ENCODE measurements at regions of chr2 and their contacts with region 1.

Region 1: DNA sequence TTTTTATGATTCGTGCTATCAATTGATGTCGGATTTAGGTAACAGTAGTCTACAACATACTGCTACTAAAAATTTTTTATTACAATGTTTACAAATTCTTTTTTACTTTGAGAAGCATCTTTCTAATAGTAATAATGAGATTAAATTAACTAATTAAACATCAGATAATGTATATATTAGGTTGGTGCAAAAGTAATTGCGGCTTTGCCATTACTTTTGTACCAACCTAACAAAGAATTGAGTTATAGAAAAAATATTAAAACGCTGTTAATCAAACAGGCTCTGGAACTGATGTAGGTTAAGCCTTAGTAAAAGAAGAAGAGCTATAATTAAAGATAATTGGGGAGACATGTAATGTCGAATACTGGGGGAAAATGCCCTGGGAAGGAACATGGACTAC is 7.3 kb downstream of the MYL1 start:
- DNase-seq: no peak
- H3K4me3 ChIP-seq: no peak overlapping the region
- H3K4me3 Mint-ChIP-seq: no peak overlapping the region
- H3K27ac Mint-ChIP-seq: no peak overlapping the region
- H3K4me1 ChIP-seq: no peaks in the 10 kb centered on the region
- H3K4me1 Mint-ChIP-seq: no peaks in the 10 kb centered on the region
- H3K27me3 ChIP-seq: no peaks in the 10 kb centered on the region
- H3K27me3 Mint-ChIP-seq: peaks cover 8% of the 10 kb centered on the region
- CTCF ChIP-seq: no peak

Region 2: GRCh38 chr2:210283796-210284195 is 23.9 kb before region 1 on chr2:
- CTCF ChIA-PET with region 1: no interaction called
- POLR2A ChIA-PET with region 1: no interaction called
- intact Hi-C with region 1: loop called (anchors 1 kb)
- DNase-seq: no peak
- H3K4me3 ChIP-seq: no peak overlapping the region
- H3K4me3 Mint-ChIP-seq: no peak overlapping the region
- H3K27ac Mint-ChIP-seq: no peak overlapping the region
- H3K4me1 ChIP-seq: no peaks in the 10 kb centered on the region
- H3K4me1 Mint-ChIP-seq: no peaks in the 10 kb centered on the region
- H3K27me3 ChIP-seq: no peaks in the 10 kb centered on the region
- H3K27me3 Mint-ChIP-seq: peaks cover 5% of the 10 kb centered on the region
- CTCF ChIP-seq: no peak

Measured in Caco-2 (cell line).